Endothelial cell of umbilical vein (primary cell): ENCODE measurements at regions of chr1 and their contacts with region 1.

Region 1: GRCh38 chr1:20430355-20431175 is 55.4 kb downstream of the CAMK2N1 start:
- DNase-seq: peak; percentile 34
- H3K4me3 ChIP-seq: no peak overlapping the region
- H3K27ac ChIP-seq: no peak overlapping the region
- H3K4me1 ChIP-seq: peaks cover 8% of the 10 kb centered on the region
- H3K27me3 ChIP-seq: no peaks in the 10 kb centered on the region
- CTCF ChIP-seq: peak; percentile 64 to 79
- POLR2A ChIP-seq: no peak

Region 2: DNA sequence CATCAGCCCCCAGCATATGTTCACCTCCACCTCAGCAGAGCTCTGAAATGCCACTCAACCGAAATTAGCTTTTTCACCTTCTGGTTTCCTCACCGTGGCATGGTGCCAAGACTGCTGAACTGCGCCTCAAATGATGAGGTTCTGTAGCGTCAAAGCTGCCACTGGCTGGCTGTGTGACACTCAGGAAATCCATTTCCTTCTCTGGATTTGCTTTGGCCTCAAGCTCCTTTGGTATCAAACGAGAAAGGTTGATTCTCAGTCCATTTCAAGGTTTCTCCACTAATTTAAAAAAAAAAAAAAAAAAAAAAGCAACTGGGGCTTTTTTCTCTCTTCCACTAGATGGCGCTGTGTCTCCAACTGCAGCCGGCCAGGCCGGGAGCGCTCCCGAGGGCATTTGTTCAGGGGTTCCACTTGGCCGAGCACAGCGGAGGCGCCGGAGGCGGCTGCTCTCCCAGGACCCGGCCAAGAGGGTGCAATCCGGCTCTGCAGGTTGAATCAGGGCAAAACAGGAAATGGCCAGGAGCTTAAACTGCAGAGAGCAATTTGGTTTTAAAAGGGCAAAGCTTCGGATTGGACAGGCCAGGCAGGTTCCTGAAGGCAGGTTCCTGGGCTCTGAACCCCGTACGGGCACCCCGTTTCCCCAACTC is 217.8 kb before region 1 on chr1:
- CTCF ChIA-PET with region 1: interaction called, 4 read pairs
- POLR2A ChIA-PET with region 1: no interaction called
- dilution Hi-C with region 1: no loop called
- intact Hi-C with region 1: loop called (anchors 1 kb)
- DNase-seq: peak; percentile 39
- H3K4me3 ChIP-seq: no peak overlapping the region
- H3K27ac ChIP-seq: no peak overlapping the region
- H3K4me1 ChIP-seq: no peaks in the 10 kb centered on the region
- H3K27me3 ChIP-seq: peaks cover 7% of the 10 kb centered on the region in 2 experiments
- CTCF ChIP-seq: peak; percentile 76 to 79
- POLR2A ChIP-seq: no peak

Region 3: DNA sequence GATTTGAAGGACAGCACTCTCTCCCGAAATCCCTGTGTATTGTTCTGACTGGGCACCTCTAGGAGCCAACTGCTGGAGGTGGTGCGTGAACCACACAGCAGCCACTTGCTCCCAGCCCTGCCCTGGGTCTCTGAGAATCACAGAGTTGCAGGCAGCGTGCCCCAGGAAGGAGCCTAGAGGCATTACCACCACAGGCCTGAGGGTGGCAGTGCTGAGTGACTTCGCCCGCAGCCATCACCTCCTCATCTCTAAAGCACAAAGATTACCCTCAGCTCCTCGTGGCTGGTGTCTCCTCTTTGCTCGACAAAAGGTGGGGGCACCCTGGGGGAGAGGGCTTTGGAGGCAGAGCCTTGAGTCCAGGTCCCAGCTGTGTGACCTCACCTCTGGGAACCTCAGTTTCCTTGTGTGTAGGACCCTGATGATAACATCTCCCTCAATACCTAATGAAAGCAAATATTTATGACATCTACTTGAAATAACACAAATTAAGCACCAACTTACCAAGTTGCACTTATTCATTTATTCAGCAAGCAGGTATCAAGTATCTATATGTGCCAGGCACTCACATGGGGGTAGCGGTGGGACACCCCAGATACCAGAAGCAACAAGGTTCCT is 53.6 kb before region 1 on chr1:
- CTCF ChIA-PET with region 1: interaction called, 11 read pairs
- POLR2A ChIA-PET with region 1: no interaction called
- dilution Hi-C with region 1: no loop called
- intact Hi-C with region 1: loop called (anchors 1 kb)
- DNase-seq: peak; percentile 58
- H3K4me3 ChIP-seq: no peak overlapping the region
- H3K27ac ChIP-seq: no peak overlapping the region
- H3K4me1 ChIP-seq: no peaks in the 10 kb centered on the region
- H3K27me3 ChIP-seq: no peaks in the 10 kb centered on the region
- CTCF ChIP-seq: peak; percentile 73 to 91
- POLR2A ChIP-seq: no peak

Region 4: GRCh38 chr1:20400341-20401177 is 30.0 kb before region 1 on chr1:
- CTCF ChIA-PET with region 1: no interaction called
- POLR2A ChIA-PET with region 1: no interaction called
- dilution Hi-C with region 1: no loop called
- intact Hi-C with region 1: no loop called
- DNase-seq: no peak
- H3K4me3 ChIP-seq: no peak overlapping the region
- H3K27ac ChIP-seq: no peak overlapping the region
- H3K4me1 ChIP-seq: no peaks in the 10 kb centered on the region
- H3K27me3 ChIP-seq: peaks cover under 1 to 3% of the 10 kb centered on the region in 2 experiments
- CTCF ChIP-seq: no peak
- POLR2A ChIP-seq: no peak

Region 5: DNA sequence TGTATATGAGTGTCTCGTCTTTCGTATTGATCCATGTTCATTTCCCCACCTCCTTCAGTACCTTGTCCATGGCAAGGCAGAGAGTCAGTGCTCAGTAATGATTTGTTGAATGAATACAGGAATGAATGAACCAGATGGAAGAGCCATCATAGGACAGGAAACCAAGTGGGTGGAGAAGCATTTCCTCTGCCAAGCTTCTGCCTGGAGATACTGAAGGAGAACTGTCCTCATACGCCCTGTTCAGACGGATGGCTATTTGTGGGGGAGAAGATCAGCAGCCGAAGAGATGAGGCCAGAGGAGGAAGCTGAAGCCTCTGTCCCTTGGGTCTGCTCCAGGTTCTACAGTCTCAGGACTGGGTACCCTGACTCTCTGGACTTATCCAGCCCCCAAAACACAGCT is 127.6 kb after region 1 on chr1:
- CTCF ChIA-PET with region 1: no interaction called
- POLR2A ChIA-PET with region 1: no interaction called
- dilution Hi-C with region 1: no loop called
- intact Hi-C with region 1: no loop called
- DNase-seq: no peak
- H3K4me3 ChIP-seq: no peak overlapping the region
- H3K27ac ChIP-seq: no peak overlapping the region
- H3K4me1 ChIP-seq: no peaks in the 10 kb centered on the region
- H3K27me3 ChIP-seq: peaks cover 38 to 39% of the 10 kb centered on the region in 2 experiments
- CTCF ChIP-seq: no peak
- POLR2A ChIP-seq: no peak

Region 6: GRCh38 chr1:20584890-20585289 is 154.3 kb after region 1 on chr1:
- CTCF ChIA-PET with region 1: no interaction called
- POLR2A ChIA-PET with region 1: no interaction called
- dilution Hi-C with region 1: no loop called
- intact Hi-C with region 1: no loop called
- DNase-seq: no peak
- H3K4me3 ChIP-seq: no peak overlapping the region
- H3K27ac ChIP-seq: no peak overlapping the region
- H3K4me1 ChIP-seq: peaks cover 12% of the 10 kb centered on the region
- H3K27me3 ChIP-seq: peaks cover 2 to 7% of the 10 kb centered on the region in 2 experiments
- CTCF ChIP-seq: no peak
- POLR2A ChIP-seq: no peak